Gastrocnemius medialis (tissue), 4 donors: ENCODE measurements at regions of chr11 and their contacts with region 1.

Region 1: GRCh38 chr11:63613517-63614135 is 607 bp downstream of the PLAAT3 start:
- DNase-seq: peak; percentile 57 to 78
- ATAC-seq: peak; percentile 73 to 76
- H3K4me3 ChIP-seq: peak overlapping the region; percentile 65 to 95 (median 86)
- H3K27ac ChIP-seq: peak overlapping the region; percentile 85 to 99 (median 94)
- H3K4me1 ChIP-seq: peaks cover 43 to 46% of the 10 kb centered on the region in 2 donors
- H3K27me3 ChIP-seq: no peaks in the 10 kb centered on the region
- CTCF ChIP-seq: no peak
- POLR2A ChIP-seq: peak; percentile 24 to 37

Region 2: GRCh38 chr11:63508009-63508408 is 105.6 kb before region 1 on chr11:
- in situ Hi-C with region 1: no loop called
- intact Hi-C with region 1: loop called (anchors 1 kb)
- DNase-seq: peak; percentile 41 to 49
- ATAC-seq: peak; percentile 27 to 39
- H3K4me3 ChIP-seq: no peak overlapping the region
- H3K27ac ChIP-seq: no peak overlapping the region
- H3K4me1 ChIP-seq: peaks cover 37 to 46% of the 10 kb centered on the region in 2 donors
- H3K27me3 ChIP-seq: no peaks in the 10 kb centered on the region
- CTCF ChIP-seq: peak in 3 of 5 experiments; percentile 25 to 51 (median 42)
- POLR2A ChIP-seq: no peak

Region 3: DNA sequence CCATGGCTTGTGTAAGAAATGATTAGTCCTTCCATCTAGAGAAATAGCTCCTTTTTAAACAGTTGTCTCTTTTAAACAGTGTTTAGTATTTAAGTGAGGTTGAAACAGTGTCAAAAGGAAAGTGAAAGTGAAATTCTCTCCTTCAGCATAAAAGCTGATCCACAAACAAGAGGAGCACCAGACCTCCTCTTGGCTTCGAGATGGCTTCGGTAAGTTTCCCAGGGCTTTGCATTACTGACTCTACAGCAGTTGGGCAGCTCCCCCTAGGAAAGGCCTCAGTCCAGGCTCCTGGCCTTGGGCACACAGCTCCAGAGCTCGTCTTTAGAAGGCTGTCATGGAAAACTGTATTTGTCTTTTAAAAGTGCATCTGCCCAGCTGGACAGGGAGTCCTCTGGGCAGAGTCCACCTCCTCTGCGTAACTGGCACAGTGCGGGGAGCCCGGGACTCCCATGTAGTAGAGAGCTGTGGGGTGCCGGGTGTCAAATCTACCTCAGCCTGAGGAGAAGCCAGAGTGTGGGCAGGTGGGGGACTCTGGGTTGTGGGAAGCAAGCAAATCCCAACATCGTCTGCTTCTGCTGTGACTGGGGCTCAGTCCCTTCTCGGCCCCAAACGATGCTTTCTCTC is 76.8 kb before region 1 on chr11 and contains the start of gene PLAAT4:
- in situ Hi-C with region 1: no loop called
- intact Hi-C with region 1: loop called (anchors 2 kb)
- DNase-seq: no peak
- ATAC-seq: peak; percentile 68 to 69
- H3K4me3 ChIP-seq: peak within 1 kb of the TSS; percentile 42 to 83 (median 52)
- H3K27ac ChIP-seq: peak within 1 kb of the TSS; percentile 75 to 84 (median 81)
- H3K4me1 ChIP-seq: peaks cover 21 to 26% of the 10 kb centered on the region in 2 donors
- H3K27me3 ChIP-seq: no peaks in the 10 kb centered on the region
- CTCF ChIP-seq: no peak
- POLR2A ChIP-seq: no peak
- total RNA-seq, gene PLAAT4: 3.1 to 13.2 (median 5.8) TPM

Region 4: DNA sequence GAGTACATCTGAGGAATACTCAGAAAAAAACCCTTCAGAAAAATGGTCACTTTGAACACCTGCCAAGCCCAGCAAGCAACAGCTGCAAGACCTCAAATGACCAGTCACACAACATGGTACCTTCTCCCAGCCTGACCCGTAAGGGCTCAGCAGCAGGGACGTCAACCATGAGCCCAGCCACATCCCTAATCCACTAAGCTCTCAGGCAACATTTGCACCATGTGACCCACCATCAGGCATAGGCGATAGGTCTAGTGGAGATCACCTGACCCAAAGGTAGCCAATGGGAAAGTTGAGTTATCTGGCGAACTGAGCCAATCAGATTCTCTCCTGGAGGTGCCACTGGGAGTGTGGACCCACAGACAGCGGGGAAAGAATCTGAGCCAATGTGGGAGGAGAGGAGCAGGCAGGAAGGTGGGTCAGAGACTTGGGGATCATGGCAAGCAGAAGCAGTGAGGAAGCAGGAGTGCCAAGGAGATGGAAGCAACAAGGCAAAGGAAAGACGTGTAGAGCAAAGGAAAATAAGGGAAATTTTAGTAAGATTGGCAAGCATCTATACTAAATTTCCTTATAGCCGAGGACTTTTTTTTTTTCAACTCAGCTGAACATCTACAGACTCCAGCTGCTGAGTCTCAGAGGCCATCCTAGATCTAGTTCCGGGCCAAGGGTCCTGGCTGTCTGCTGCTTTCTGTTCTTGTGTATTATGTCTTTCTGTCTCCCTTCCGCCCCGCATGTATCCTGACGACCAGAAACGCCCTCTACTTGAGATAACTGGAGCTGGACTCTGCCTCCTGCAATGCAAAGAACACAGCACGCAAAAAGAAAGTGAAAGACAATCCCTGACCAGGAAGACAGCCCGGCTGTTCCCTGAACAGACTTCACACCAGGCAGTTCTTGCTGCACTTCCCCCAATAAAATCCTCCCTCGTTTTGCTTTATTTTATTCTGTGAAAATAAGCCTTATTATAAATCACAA is 39.5 kb before region 1 on chr11:
- in situ Hi-C with region 1: no loop called
- intact Hi-C with region 1: loop called (anchors 2 kb)
- DNase-seq: peak; percentile 34 to 68
- ATAC-seq: peak; percentile 87 to 89
- H3K4me3 ChIP-seq: peak overlapping the region; percentile 30 to 56 (median 48)
- H3K27ac ChIP-seq: peak overlapping the region; percentile 66 to 91 (median 82)
- H3K4me1 ChIP-seq: peaks cover 26 to 30% of the 10 kb centered on the region in 2 donors
- H3K27me3 ChIP-seq: no peaks in the 10 kb centered on the region
- CTCF ChIP-seq: peak in 2 of 5 experiments; percentile 16 to 17
- POLR2A ChIP-seq: no peak

Region 5: GRCh38 chr11:63671322-63672155 is 57.9 kb after region 1 on chr11 and contains the start of gene ATL3:
- in situ Hi-C with region 1: no loop called
- intact Hi-C with region 1: loop called (anchors 2 kb)
- DNase-seq: peak; percentile 97 to 98
- ATAC-seq: peak; percentile 88 to 91
- H3K4me3 ChIP-seq: peak within 1 kb of the TSS; percentile 78 to 92 (median 85)
- H3K27ac ChIP-seq: peak within 1 kb of the TSS; percentile 96 to 98 (median 97)
- H3K4me1 ChIP-seq: peaks cover 46 to 48% of the 10 kb centered on the region in 2 donors
- H3K27me3 ChIP-seq: no peaks in the 10 kb centered on the region
- CTCF ChIP-seq: peak in 2 of 5 experiments; percentile 12 to 23
- POLR2A ChIP-seq: peak; percentile 75
- total RNA-seq, gene ATL3: 10.2 to 16.5 (median 12.4) TPM